Sigmoid colon (tissue), 7 donors: ENCODE measurements at regions of chr14 and their contacts with region 1.

Region 1: DNA sequence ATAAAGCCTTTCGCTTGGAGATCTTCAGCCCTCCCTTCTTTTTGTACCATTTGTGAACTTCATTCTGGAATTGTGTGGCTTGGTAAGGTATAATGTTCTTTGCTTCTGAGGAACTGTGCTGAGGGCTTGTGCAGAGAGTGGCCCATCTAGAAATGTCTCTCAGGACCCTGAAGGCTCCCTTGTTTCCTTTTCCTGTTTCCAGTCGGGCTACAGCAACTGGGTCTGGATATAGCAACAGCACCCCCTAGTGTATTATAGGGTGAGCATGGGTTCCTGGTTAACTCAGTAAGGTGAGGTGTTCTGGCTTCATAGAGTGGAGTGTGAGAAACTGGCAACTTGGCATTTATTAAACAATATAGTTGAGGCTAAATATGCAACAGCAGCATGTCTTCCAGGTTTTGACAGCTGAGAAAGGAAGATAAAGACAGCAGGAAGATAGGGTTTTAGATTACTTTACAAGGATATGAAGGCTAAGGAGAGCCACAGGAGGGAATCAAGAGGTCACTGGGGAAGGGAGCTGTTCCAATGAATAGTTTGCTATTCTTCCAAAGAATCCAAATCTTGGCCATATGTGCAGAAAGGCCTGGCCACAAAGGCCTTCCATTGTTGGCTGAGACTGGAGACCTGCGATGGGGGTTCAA is 49.1 kb upstream of the RNU6-8 start:
- DNase-seq: peak; percentile 72
- H3K4me3 ChIP-seq: no peak overlapping the region
- H3K27ac ChIP-seq: peak overlapping the region; percentile 1 to 72 (median 61)
- H3K4me1 ChIP-seq: peaks cover 0 to 45% (median 36%) of the 10 kb centered on the region in 4 donors
- H3K27me3 ChIP-seq: no peaks in the 10 kb centered on the region
- CTCF ChIP-seq: peak; percentile 71 to 80 (median 76)
- EP300 ChIP-seq: no peak
- POLR2A ChIP-seq: no peak

Region 2: GRCh38 chr14:31456841-31457664 is 795.1 kb before region 1 on chr14 and contains the start of gene DTD2:
- intact Hi-C with region 1: loop called (anchors 5 kb)
- DNase-seq: peak; percentile 97
- H3K4me3 ChIP-seq: peak within 1 kb of the TSS; percentile 68 to 80 (median 74)
- H3K27ac ChIP-seq: peak within 1 kb of the TSS; percentile 88 to 95 (median 94)
- H3K4me1 ChIP-seq: peaks cover 0 to 32% (median 16%) of the 10 kb centered on the region in 4 donors
- H3K27me3 ChIP-seq: no peaks in the 10 kb centered on the region
- CTCF ChIP-seq: no peak
- EP300 ChIP-seq: no peak
- POLR2A ChIP-seq: peak; percentile 51 to 63
- total RNA-seq, gene DTD2: 26.0 to 31.6 (median 27.6) TPM

Region 3: GRCh38 chr14:31895206-31895605 is 356.9 kb before region 1 on chr14:
- intact Hi-C with region 1: no loop called
- DNase-seq: no peak
- H3K4me3 ChIP-seq: no peak overlapping the region
- H3K27ac ChIP-seq: no peak overlapping the region
- H3K4me1 ChIP-seq: peaks cover 0 to 8% (median 0%) of the 10 kb centered on the region in 4 donors
- H3K27me3 ChIP-seq: no peaks in the 10 kb centered on the region
- CTCF ChIP-seq: no peak
- EP300 ChIP-seq: no peak
- POLR2A ChIP-seq: no peak

Region 4: GRCh38 chr14:31926123-31926522 is 326.0 kb before region 1 on chr14:
- intact Hi-C with region 1: loop called (anchors 5 kb)
- DNase-seq: no peak
- H3K4me3 ChIP-seq: no peak overlapping the region
- H3K27ac ChIP-seq: peak overlapping the region in 3 of 4 donors; percentile 63 to 79 (median 70)
- H3K4me1 ChIP-seq: peaks cover 0 to 21% (median 18%) of the 10 kb centered on the region in 4 donors
- H3K27me3 ChIP-seq: no peaks in the 10 kb centered on the region
- CTCF ChIP-seq: peak in 3 of 4 experiments; percentile 24 to 31 (median 25)
- EP300 ChIP-seq: no peak
- POLR2A ChIP-seq: no peak

Region 5: GRCh38 chr14:32076278-32077080 is 175.7 kb before region 1 on chr14:
- intact Hi-C with region 1: loop called (anchors 1 kb)
- DNase-seq: peak; percentile 98
- H3K4me3 ChIP-seq: peak overlapping the region; percentile 90 to 100 (median 98)
- H3K27ac ChIP-seq: peak overlapping the region; percentile 98 to 100 (median 100)
- H3K4me1 ChIP-seq: peaks cover 0 to 49% (median 33%) of the 10 kb centered on the region in 4 donors
- H3K27me3 ChIP-seq: no peaks in the 10 kb centered on the region
- CTCF ChIP-seq: no peak
- EP300 ChIP-seq: no peak
- POLR2A ChIP-seq: peak; percentile 74 to 81

Region 6: GRCh38 chr14:32396885-32397284 is 144.7 kb after region 1 on chr14:
- intact Hi-C with region 1: no loop called
- DNase-seq: no peak
- H3K4me3 ChIP-seq: no peak overlapping the region
- H3K27ac ChIP-seq: no peak overlapping the region
- H3K4me1 ChIP-seq: peaks cover 0 to 19% (median 11%) of the 10 kb centered on the region in 4 donors
- H3K27me3 ChIP-seq: no peaks in the 10 kb centered on the region
- CTCF ChIP-seq: no peak
- EP300 ChIP-seq: no peak
- POLR2A ChIP-seq: no peak

Region 7: GRCh38 chr14:32408018-32408417 is 155.9 kb after region 1 on chr14:
- intact Hi-C with region 1: loop called (anchors 5 kb)
- DNase-seq: peak; percentile 74
- H3K4me3 ChIP-seq: no peak overlapping the region
- H3K27ac ChIP-seq: peak overlapping the region in 3 of 4 donors; percentile 74 to 83 (median 79)
- H3K4me1 ChIP-seq: peaks cover 0 to 52% (median 29%) of the 10 kb centered on the region in 4 donors
- H3K27me3 ChIP-seq: no peaks in the 10 kb centered on the region
- CTCF ChIP-seq: no peak
- EP300 ChIP-seq: no peak
- POLR2A ChIP-seq: no peak

Region 8: DNA sequence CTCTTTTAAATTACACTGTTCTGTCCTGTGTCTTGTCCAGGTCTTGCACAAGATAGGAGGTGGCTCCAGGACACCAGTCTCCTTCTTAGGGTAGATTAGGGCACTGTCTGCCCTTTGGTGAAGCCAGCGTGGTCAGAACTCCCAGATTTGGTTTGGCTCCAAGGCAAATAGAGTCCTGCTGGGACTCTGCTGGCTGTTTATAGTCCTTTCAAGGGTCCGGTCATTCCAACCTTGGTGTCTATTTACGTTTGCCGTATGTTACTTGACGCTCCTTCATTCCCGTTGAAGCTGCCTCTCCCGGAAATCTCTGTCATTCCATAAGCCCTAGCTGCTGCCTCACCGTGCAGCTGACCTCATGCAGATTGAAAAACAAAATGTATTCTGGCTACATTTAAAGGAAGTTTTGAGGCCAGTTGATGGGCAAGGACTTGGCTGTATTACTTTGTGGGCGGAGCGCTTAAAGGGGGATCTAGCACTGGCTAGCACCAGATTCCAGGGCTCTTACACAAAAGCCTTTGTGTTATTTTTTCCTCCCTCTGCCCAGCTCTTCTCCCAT is 257.6 kb after region 1 on chr14:
- intact Hi-C with region 1: loop called (anchors 5 kb)
- DNase-seq: peak; percentile 83
- H3K4me3 ChIP-seq: peak overlapping the region; percentile 4 to 19 (median 13)
- H3K27ac ChIP-seq: peak overlapping the region; percentile 75 to 88 (median 82)
- H3K4me1 ChIP-seq: peaks cover 0 to 51% (median 27%) of the 10 kb centered on the region in 4 donors
- H3K27me3 ChIP-seq: no peaks in the 10 kb centered on the region
- CTCF ChIP-seq: no peak
- EP300 ChIP-seq: peak in 3 of 4 donors; percentile 24 to 80 (median 78)
- POLR2A ChIP-seq: no peak